HCT116 (cell line): ENCODE measurements at regions of chr1 and their contacts with region 1.

Region 1: GRCh38 chr1:160777486-160778089 is 18.4 kb upstream of the LY9 start:
- DNase-seq: peak; percentile 29
- ATAC-seq: peak; percentile 73
- H3K4me3 ChIP-seq: no peak overlapping the region
- H3K27ac ChIP-seq: no peak overlapping the region
- H3K4me1 ChIP-seq: peaks cover 9 to 10% of the 10 kb centered on the region in 2 experiments; a peak in 2 of 4 replicates
- H3K27me3 ChIP-seq: no peaks in the 10 kb centered on the region
- CTCF ChIP-seq: peak; percentile 60 to 74 (median 74)
- POLR2A ChIP-seq: no peak
- RAD21 ChIP-seq: peak; percentile 58

Region 2: DNA sequence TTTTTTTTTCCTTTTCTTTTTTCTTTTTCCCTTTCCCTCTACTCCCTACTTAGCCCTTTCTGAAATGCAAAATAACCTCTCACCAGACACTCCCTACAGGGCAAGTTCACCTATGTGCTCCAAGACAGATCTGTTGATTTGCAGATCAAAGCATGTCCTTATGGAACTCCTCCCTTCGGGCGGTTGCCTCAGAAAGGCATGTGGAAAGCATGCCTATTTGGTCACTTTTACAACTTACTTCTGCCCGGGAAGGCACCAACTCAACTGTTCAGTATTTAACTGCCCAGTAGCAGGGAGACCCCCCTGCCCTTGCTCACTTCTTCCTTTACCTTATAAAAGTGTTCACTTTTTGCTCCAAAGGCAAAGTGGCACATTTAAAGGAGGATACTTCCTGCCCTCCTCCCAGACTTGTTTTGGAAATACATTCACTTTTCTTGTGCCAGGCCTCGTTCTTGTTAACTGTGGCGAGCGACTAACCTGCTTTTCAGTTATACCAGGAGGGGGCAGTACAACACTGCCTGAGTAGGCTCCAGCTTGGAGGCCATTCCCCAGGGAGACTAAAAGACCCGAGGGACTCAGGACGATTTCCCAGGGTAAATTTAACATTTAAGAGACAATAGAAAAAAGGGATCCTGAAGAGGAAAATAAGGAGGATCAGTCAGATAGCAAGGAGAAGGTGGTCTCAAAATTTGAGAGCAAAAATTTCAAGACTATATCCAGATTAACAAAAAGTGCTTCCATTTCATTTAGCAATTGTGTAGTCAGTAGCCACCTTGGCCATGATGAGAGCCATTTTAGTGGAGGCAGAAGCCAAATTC is 50.9 kb before region 1 on chr1:
- CTCF ChIA-PET with region 1: interaction called, 4 read pairs
- POLR2A ChIA-PET with region 1: no interaction called
- RAD21 ChIA-PET with region 1: no interaction called
- intact Hi-C with region 1: loop called (anchors 5 kb)
- DNase-seq: peak; percentile 75
- ATAC-seq: peak; percentile 95
- H3K4me3 ChIP-seq: no peak overlapping the region
- H3K27ac ChIP-seq: 0 out of 2 replicates have a peak overlapping the region, but pooled peaks have one; percentile 11
- H3K4me1 ChIP-seq: peaks cover 6 to 14% of the 10 kb centered on the region in 2 experiments; a peak in 3 of 4 replicates
- H3K27me3 ChIP-seq: no peaks in the 10 kb centered on the region
- CTCF ChIP-seq: peak; percentile 88 to 95 (median 94)
- POLR2A ChIP-seq: no peak
- RAD21 ChIP-seq: peak; percentile 93

Region 3: DNA sequence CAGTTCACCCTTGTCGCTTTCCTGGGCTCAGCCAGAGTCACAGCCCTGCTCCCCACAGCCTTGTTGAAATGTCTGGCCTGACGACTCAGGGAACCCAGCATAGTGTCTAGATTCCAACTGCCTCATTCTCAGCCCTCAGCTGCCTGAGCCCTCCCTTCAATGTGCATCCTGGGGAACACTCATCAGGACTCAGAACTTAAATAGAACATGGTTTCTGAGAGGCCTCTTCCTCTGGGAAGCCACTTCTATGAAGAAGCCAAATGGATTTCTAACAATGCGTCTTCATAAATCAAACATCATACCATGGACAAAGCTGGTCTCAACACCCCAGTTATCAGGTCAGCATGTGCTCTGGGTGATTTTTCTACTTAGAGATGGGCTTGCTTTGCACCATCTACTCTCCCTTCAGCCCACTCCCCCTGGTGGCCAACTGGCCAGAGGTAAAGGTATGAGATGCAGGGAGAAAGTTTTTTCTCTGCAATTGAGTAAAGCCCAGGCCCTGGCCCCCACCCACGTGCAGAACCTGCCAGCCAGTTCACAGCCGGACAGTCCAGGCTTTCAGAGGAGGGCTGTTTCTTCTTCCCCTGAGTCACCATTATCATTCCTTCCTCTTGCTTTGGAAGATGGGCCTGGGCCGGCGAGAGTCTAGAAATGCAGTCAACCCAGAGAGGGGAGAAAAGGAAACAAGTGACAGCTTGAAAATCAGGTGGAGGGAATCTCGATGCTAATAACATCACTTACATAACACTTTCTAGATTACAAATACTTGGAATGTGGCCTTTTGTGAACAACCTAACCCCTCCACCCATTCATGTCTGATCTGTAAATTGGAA is 52.9 kb after region 1 on chr1:
- CTCF ChIA-PET with region 1: interaction called, 8 read pairs
- POLR2A ChIA-PET with region 1: no interaction called
- RAD21 ChIA-PET with region 1: interaction called in 1 of 2 experiments, 4 read pairs
- intact Hi-C with region 1: loop called (anchors 1 kb)
- DNase-seq: peak; percentile 53
- ATAC-seq: peak; percentile 97
- H3K4me3 ChIP-seq: no peak overlapping the region
- H3K27ac ChIP-seq: no peak overlapping the region
- H3K4me1 ChIP-seq: 0 out of 4 replicates have a peak, but pooled peaks cover 0 to 3% of the 10 kb centered on the region in 2 experiments
- H3K27me3 ChIP-seq: peaks cover 5% of the 10 kb centered on the region; the same call in 1 of the 2 replicates
- CTCF ChIP-seq: peak; percentile 78 to 91 (median 87)
- POLR2A ChIP-seq: no peak
- RAD21 ChIP-seq: peak; percentile 70

Region 4: GRCh38 chr1:161351482-161351881 is 573.9 kb after region 1 on chr1:
- CTCF ChIA-PET with region 1: no interaction called
- POLR2A ChIA-PET with region 1: no interaction called
- RAD21 ChIA-PET with region 1: no interaction called
- intact Hi-C with region 1: no loop called
- DNase-seq: no peak
- ATAC-seq: no peak
- H3K4me3 ChIP-seq: no peak overlapping the region
- H3K27ac ChIP-seq: no peak overlapping the region
- H3K4me1 ChIP-seq: no peaks in the 10 kb centered on the region
- H3K27me3 ChIP-seq: no peaks in the 10 kb centered on the region
- CTCF ChIP-seq: no peak
- POLR2A ChIP-seq: no peak
- RAD21 ChIP-seq: no peak